A549 (cell line): ENCODE measurements at regions of chr4 and their contacts with region 1.

Region 1: DNA sequence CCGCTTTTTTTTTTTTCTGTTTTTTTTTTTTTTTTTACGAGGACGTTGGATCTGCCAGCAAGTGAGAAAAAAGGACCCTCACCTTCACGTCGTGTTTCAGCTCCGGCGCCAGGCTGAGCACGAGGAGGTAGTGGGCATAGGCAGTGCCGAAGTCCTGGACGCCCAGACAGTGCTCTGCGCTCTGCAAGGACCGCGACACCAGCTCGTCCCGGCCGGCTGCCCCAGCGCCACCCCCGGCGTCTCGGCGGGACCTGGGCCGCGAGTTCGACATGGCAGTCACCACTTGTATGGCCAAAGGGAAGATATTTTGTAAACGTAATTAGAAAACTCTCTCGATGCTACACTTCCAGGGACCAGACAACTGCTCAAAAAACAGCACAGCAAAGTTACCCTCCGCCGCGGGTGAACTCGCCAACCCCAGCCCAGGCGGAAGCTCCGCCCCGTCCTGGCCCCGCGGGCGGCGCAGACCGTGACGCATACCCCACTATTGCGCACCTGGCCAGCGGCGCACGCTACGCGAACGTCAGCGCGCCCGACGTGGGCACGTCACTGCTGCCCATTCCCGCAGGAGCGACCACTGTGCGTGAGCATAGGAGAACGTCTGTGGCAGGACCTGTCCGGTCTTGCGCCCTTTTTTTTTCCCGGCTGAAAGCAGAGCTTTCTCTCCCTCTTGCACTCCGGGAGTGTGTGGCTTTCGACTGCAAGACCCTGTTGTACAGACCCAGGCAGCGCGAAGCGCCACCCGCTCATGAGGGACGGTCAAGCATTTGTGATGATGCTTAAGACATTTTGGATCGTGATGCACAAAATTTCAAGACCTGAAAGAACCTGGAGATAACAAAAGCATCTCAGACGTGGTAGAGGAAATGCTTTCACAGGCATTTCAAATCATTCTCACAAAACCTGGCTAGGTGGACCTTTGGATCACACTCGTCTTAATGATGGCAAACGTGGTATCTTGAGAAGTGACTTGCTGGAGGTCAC is at the start of gene PRMT9:
- DNase-seq: peak; percentile 86 to 87
- ATAC-seq: peak; percentile 99 to 100
- H3K4me3 ChIP-seq: peak within 1 kb of the TSS; percentile 67
- H3K27ac ChIP-seq: peak within 1 kb of the TSS; percentile 84 to 90
- H3K4me1 ChIP-seq: 0 out of 3 replicates have a peak, but pooled peaks cover 3% of the 10 kb centered on the region
- CTCF ChIP-seq: no peak
- EP300 ChIP-seq: no peak
- POLR2A ChIP-seq: peak; percentile 96
- RAD21 ChIP-seq: no peak
- polyA plus RNA-seq, gene PRMT9: 6.1 and 6.3 TPM in 2 replicates

Region 2: DNA sequence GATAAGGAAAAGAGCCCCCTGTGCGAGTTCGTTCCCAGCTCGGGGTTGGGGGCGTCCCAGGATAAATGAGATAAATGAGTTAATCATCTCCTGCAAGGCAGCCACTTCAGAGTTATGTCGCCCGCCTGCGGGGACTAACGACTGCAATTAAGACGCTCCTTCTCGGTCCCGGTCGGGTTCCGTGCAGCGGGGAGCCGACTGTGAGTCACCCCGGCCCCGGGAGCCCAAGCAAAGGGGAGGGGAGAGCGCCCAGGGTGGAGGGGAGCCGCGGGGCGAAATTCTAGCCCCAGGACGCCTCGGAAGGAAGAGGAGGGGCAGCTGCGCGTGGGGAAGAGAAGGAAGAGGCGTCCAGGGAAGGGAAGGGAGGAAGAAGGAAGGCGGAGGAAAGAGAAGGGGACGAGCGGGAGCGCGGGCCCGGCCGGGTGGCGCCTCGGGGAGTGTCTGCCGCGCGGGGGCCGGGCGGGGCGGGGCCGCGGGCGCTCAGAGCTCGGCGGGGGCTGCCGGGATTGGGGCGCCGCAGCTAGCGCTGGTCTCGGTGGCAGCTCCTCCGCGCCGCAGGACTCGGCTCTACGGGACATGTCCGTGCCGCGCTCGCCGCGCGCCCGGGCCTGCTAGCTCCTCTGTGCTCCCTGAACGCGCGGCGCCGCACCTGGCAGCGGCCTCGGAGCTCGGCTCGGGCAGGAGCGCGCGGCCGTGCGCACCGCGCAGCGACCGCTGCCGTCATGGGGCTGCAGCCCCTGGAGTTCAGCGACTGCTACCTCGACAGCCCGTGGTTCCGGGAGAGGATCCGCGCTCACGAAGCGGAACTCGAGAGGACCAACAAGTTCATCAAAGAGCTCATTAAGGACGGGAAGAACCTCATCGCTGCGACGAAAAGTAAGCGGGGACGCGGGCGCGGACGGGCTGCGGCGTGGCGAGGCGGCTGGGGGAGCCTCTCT is 47.8 kb after region 1 on chr4 and contains the start of gene ARHGAP10:
- CTCF ChIA-PET with region 1: no interaction called
- POLR2A ChIA-PET with region 1: interaction called, 10 read pairs
- DNase-seq: peak; percentile 57 to 64
- ATAC-seq: peak; percentile 84
- H3K4me3 ChIP-seq: peak within 1 kb of the TSS; percentile 82
- H3K27ac ChIP-seq: peak within 1 kb of the TSS; percentile 73 to 88
- H3K4me1 ChIP-seq: peaks cover 28% of the 10 kb centered on the region
- CTCF ChIP-seq: no peak
- EP300 ChIP-seq: no peak
- POLR2A ChIP-seq: peak; percentile 44
- RAD21 ChIP-seq: no peak
- polyA plus RNA-seq, gene ARHGAP10: 6.0 and 7.2 TPM in 2 replicates

Region 3: GRCh38 chr4:147801829-147802228 is 117.8 kb after region 1 on chr4:
- CTCF ChIA-PET with region 1: no interaction called
- POLR2A ChIA-PET with region 1: interaction called, 13 read pairs
- DNase-seq: no peak
- ATAC-seq: no peak
- H3K4me3 ChIP-seq: no peak overlapping the region
- H3K27ac ChIP-seq: no peak overlapping the region
- H3K4me1 ChIP-seq: no peaks in the 10 kb centered on the region
- CTCF ChIP-seq: no peak
- EP300 ChIP-seq: no peak
- POLR2A ChIP-seq: no peak
- RAD21 ChIP-seq: no peak

Region 4: DNA sequence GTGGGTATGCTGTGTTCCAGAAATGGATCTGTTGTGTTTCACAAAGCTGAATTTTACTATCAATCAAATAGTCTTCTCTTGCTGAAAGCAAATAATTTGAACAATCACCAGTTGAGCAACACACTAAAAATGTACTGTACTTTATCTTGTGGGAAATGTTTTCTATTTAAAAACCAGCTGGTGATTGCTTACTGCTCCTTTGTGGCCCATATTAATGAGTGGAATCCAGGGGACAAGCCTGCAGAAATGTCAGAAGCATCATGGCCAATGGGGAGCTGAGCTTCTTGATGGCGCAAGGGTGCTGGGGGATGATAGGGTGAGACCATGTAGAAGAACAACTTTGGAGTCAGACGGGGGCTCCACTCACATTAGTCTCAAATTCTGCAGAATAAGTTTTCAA is 394.1 kb after region 1 on chr4:
- CTCF ChIA-PET with region 1: no interaction called
- POLR2A ChIA-PET with region 1: interaction called, 10 read pairs
- DNase-seq: no peak
- ATAC-seq: no peak
- H3K4me3 ChIP-seq: no peak overlapping the region
- H3K27ac ChIP-seq: no peak overlapping the region
- H3K4me1 ChIP-seq: no peaks in the 10 kb centered on the region
- CTCF ChIP-seq: no peak
- EP300 ChIP-seq: no peak
- POLR2A ChIP-seq: no peak
- RAD21 ChIP-seq: no peak